Heart left ventricle (tissue), 16 donors: ENCODE measurements at regions of chr10 and their contacts with region 1.

Region 1: DNA sequence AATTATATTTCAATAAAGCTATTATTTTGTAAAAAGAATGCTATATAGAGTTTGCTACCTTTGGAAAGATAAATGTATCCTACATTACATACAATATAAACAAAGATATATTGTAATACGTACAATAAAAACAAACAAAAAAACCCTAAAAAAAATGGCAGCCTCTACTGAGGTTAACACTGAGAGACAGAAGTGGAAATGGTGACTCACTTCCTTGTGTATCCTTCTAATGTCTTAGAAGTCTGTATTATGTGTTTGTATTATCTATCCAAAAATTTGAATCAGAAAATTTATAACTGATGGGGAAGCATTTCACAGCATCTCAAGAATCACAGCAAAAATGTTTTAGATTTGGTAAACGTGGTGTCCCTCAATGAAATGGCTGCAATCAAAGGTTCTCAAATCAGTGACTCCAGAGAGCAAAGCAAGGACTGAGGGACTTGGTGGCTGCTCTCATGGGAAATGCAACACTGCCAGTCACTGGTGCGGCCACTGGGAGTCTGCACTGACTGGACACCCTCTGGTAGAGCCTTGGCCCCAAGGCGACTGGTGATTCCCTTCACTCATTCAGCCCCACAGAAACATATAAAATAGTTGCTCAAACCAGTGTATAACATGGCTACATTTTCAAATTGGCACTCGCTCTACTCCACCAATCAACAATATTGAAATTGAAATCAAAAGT is 53.8 kb downstream of the PANK1 start:
- DNase-seq: peak; percentile 25 to 73 (median 51)
- ATAC-seq: peak; percentile 48 to 78 (median 64)
- H3K4me3 ChIP-seq: no peak overlapping the region
- H3K27ac ChIP-seq: peak overlapping the region; percentile 50 to 93 (median 78)
- H3K4me1 ChIP-seq: peaks cover 0 to 58% (median 19%) of the 10 kb centered on the region in 12 donors
- H3K27me3 ChIP-seq: no peaks in the 10 kb centered on the region
- CTCF ChIP-seq: peak in 3 of 12 donors; percentile 14 to 27 (median 16)
- POLR2A ChIP-seq: no peak

Region 2: GRCh38 chr10:89414146-89414878 is 176.9 kb before region 1 on chr10 and contains the start of gene IFIT5:
- intact Hi-C with region 1: no loop called
- DNase-seq: peak; percentile 74 to 87 (median 78)
- ATAC-seq: peak; percentile 79 to 95 (median 92)
- H3K4me3 ChIP-seq: peak within 1 kb of the TSS; percentile 75 to 95 (median 86)
- H3K27ac ChIP-seq: peak within 1 kb of the TSS; percentile 92 to 99 (median 96)
- H3K4me1 ChIP-seq: peaks cover 0 to 53% (median 33%) of the 10 kb centered on the region in 12 donors
- H3K27me3 ChIP-seq: no peaks in the 10 kb centered on the region
- CTCF ChIP-seq: peak in 3 of 12 donors; percentile 23 to 30 (median 25)
- POLR2A ChIP-seq: peak in 1 of 2 donors; percentile 38
- total RNA-seq, gene IFIT5: 5.4 to 21.0 (median 10.4) TPM

Region 3: DNA sequence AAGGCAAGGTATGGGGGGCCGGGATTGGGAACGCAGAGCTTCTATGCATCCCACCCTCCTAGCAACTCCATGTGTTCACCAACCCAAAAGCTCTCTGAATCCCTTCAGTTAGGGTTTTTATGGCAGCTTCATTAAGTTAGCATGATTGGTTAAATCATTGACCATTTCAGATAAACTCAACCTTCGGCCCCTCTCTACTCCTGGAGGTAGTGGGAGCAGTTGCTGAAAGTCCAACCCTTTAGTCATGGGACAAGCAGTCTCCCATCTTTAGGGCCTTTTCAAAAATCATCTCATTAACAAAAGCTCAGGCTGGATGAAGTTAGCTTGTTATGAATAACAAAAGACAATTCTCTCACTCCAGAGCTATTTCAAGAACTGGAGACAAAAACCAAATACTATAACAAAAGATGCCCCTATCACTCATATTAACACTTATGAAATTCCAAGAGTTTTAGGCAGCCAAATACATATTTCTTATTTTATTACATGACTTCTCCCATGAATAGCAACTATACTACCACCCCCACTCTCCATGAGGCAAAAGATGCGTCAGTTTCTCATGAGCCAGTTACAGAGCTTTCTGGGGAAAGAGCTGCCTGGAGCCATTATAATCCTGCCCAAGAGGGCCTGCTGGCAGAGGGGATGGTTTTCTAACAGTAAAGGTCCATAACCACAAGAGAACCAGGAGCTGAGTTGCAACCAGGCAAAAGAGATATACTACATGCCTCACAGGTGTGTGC is 100.5 kb before region 1 on chr10:
- intact Hi-C with region 1: no loop called
- DNase-seq: no peak
- ATAC-seq: peak in 2 of 4 donors; percentile 23 to 25
- H3K4me3 ChIP-seq: no peak overlapping the region
- H3K27ac ChIP-seq: peak overlapping the region in 3 of 12 donors; percentile 28 to 42 (median 31)
- H3K4me1 ChIP-seq: peaks cover 0 to 24% (median 8%) of the 10 kb centered on the region in 12 donors
- H3K27me3 ChIP-seq: peaks cover 0 to 8% (median 0%) of the 10 kb centered on the region in 9 donors
- CTCF ChIP-seq: no peak
- POLR2A ChIP-seq: no peak

Region 4: GRCh38 chr10:89701238-89702120 is 110.2 kb after region 1 on chr10 and contains the start of gene KIF20B:
- intact Hi-C with region 1: loop called in 3 of 10 experiments (anchors 5 to 10 kb)
- DNase-seq: peak; percentile 96 to 98 (median 97)
- ATAC-seq: peak; percentile 100
- H3K4me3 ChIP-seq: peak within 1 kb of the TSS; percentile 40 to 85 (median 71)
- H3K27ac ChIP-seq: peak within 1 kb of the TSS; percentile 54 to 90 (median 86)
- H3K4me1 ChIP-seq: peaks cover 0 to 18% (median 6%) of the 10 kb centered on the region in 12 donors
- H3K27me3 ChIP-seq: no peaks in the 10 kb centered on the region
- CTCF ChIP-seq: peak; percentile 36 to 74 (median 57)
- POLR2A ChIP-seq: peak in 1 of 2 donors; percentile 68
- total RNA-seq, gene KIF20B: 0.95 to 8.6 (median 2.4) TPM